ENCODE measurements at regions of chr15 and their contacts with region 1.

Region 1: GRCh38 chr15:91852741-91853510 is 582 bp upstream of the SLCO3A1 start:
- DNase-seq: peak; percentile 79 to 92
- ATAC-seq: peak; percentile 77 to 88
- H3K4me3 ChIP-seq: peak overlapping the region; percentile 94
- H3K27ac ChIP-seq: peak overlapping the region; percentile 98 to 99
- H3K4me1 ChIP-seq: peaks cover 16% of the 10 kb centered on the region
- CTCF ChIP-seq: peak; percentile 99
- EP300 ChIP-seq: no peak
- POLR2A ChIP-seq: peak; percentile 49
- RAD21 ChIP-seq: peak; percentile 27 to 48; a peak in 4 of 5 replicates

Region 2: GRCh38 chr15:91706322-91707032 is 146.4 kb before region 1 on chr15:
- CTCF ChIA-PET with region 1: interaction called, 12 read pairs
- POLR2A ChIA-PET with region 1: no interaction called
- DNase-seq: peak; percentile 63 to 79
- ATAC-seq: peak; percentile 75 to 92; a peak in 5 of 6 replicates
- H3K4me3 ChIP-seq: no peak overlapping the region
- H3K27ac ChIP-seq: no peak overlapping the region
- H3K4me1 ChIP-seq: no peaks in the 10 kb centered on the region
- CTCF ChIP-seq: peak; percentile 59
- EP300 ChIP-seq: no peak
- POLR2A ChIP-seq: no peak
- RAD21 ChIP-seq: peak; percentile 56 to 74; a peak in 4 of 5 replicates

Region 3: GRCh38 chr15:91879148-91879547 is 26.2 kb after region 1 on chr15:
- CTCF ChIA-PET with region 1: interaction called, 18 read pairs
- POLR2A ChIA-PET with region 1: no interaction called
- DNase-seq: no peak
- ATAC-seq: no peak
- H3K4me3 ChIP-seq: no peak overlapping the region
- H3K27ac ChIP-seq: no peak overlapping the region
- H3K4me1 ChIP-seq: no peaks in the 10 kb centered on the region
- CTCF ChIP-seq: no peak
- EP300 ChIP-seq: no peak
- POLR2A ChIP-seq: no peak
- RAD21 ChIP-seq: no peak

Region 4: GRCh38 chr15:91894606-91895005 is 41.7 kb after region 1 on chr15:
- CTCF ChIA-PET with region 1: interaction called, 10 read pairs
- POLR2A ChIA-PET with region 1: interaction called, 5 read pairs
- DNase-seq: no peak
- ATAC-seq: no peak
- H3K4me3 ChIP-seq: no peak overlapping the region
- H3K27ac ChIP-seq: no peak overlapping the region
- H3K4me1 ChIP-seq: peaks cover 12% of the 10 kb centered on the region
- CTCF ChIP-seq: no peak
- EP300 ChIP-seq: no peak
- POLR2A ChIP-seq: no peak
- RAD21 ChIP-seq: no peak

Region 5: DNA sequence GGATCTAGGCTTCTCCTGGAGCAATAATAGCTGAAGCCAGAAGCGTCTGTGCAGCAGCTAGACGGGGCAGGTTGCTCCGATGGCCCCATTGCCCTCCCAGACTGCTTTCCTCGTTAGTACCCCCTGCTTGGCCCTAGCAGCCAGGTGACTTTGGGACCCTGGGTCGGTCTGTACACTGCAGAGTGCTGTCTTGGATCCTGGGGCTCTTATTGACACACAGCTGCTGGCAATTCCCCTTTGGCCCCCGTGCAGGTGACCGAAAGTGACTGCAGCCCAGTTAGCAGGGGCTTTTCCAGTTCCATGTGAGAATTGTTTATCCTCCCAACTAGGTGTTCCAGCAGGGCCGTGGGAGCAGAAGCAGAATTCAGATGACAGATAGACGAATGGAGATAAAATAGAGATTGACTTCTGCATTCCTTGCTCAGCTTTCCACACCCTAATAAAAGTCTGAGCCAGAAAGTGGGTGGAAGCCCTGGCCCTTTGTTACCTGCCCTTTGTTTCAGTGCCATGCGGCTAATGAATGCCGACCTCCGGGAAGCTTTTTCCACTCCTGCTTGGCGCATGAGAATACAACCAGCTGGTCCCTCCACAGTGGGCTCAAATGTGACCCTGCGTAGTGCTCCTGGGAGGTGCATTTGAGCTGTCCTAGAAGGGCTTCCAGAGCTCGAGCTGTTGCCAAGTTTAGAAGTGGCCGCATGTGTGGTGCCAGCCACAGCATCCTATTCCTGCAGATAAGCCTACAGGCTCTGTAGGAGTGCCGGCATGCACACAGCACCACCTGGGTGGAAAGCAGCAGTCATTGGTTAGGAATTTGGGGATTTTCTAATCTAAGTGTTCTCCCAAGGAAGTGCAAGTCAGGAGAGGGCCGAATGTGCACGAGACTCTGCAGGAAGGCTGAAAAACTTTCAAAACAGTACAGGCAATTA is 95.0 kb after region 1 on chr15:
- CTCF ChIA-PET with region 1: interaction called, 69 read pairs
- POLR2A ChIA-PET with region 1: no interaction called
- DNase-seq: peak; percentile 55 to 67
- ATAC-seq: peak; percentile 73 to 81
- H3K4me3 ChIP-seq: no peak overlapping the region
- H3K27ac ChIP-seq: peak overlapping the region; percentile 6 to 70; a peak in 3 of 6 replicates
- H3K4me1 ChIP-seq: peaks cover 46% of the 10 kb centered on the region
- CTCF ChIP-seq: no peak
- EP300 ChIP-seq: no peak
- POLR2A ChIP-seq: no peak
- RAD21 ChIP-seq: 0 out of 5 replicates have a peak, but pooled peaks of 1 of the 2 experiments have one; percentile 7

Region 6: DNA sequence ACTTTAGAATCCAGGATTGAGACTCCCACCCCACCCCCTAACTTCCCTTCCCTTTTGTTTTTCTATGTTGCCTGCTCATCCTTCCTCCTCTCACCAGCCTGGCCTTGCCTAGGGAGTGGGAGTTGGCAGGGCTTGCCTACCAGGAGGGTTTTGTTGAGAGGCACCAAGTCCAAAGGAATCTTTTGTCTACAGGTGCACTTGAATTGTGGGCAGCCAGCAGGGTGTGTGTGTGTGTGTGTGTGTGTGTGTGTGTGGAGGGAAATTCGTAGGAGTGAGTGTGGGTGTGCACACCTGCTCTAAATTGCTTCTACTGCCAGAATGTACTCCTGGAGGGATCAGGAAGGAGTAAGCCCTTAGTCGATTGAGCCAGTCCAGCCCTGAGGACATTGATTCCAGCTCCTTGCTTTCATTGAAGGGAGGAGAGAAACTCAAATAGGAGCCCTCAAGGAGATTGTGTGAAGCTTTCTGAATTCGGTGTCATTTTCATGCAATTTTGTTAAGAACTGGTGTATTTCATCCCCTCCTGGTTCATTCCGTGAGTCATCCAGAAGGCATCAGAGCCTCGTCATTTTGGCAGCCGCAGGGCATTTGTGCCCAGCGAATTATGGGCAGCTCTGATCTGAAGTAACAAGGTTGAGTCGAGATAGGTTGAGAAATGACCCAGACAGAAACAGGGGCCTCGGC is 112.7 kb after region 1 on chr15:
- CTCF ChIA-PET with region 1: interaction called, 12 read pairs
- POLR2A ChIA-PET with region 1: interaction called, 5 read pairs
- DNase-seq: peak; percentile 77 to 80
- ATAC-seq: peak; percentile 87 to 89
- H3K4me3 ChIP-seq: peak overlapping the region; percentile 5; the same call in 1 of the 3 replicates
- H3K27ac ChIP-seq: peak overlapping the region; percentile 72 to 87
- H3K4me1 ChIP-seq: peaks cover 39% of the 10 kb centered on the region
- CTCF ChIP-seq: no peak
- EP300 ChIP-seq: no peak; a peak in 1 of 5 replicates
- POLR2A ChIP-seq: no peak
- RAD21 ChIP-seq: 0 out of 5 replicates have a peak, but pooled peaks of 1 of the 2 experiments have one; percentile 9

Region 7: GRCh38 chr15:92077353-92078085 is 224.6 kb after region 1 on chr15:
- CTCF ChIA-PET with region 1: interaction called, 256 read pairs
- POLR2A ChIA-PET with region 1: no interaction called
- DNase-seq: peak; percentile 78 to 84
- ATAC-seq: peak; percentile 81 to 90
- H3K4me3 ChIP-seq: no peak overlapping the region
- H3K27ac ChIP-seq: no peak overlapping the region
- H3K4me1 ChIP-seq: peaks cover 6% of the 10 kb centered on the region; the same call in 2 of the 3 replicates
- CTCF ChIP-seq: peak; percentile 84
- EP300 ChIP-seq: no peak
- POLR2A ChIP-seq: no peak
- RAD21 ChIP-seq: peak; percentile 96 to 98